ENCODE measurements at regions of chr15 and their contacts with region 1.

Region 1: GRCh38 chr15:67850995-67851571 is 11.2 kb upstream of the RNU6-1 start:
- DNase-seq: no peak
- H3K4me3 ChIP-seq: no peak overlapping the region
- H3K27ac ChIP-seq: no peak overlapping the region
- H3K4me1 ChIP-seq: peaks cover 6% of the 10 kb centered on the region
- H3K27me3 ChIP-seq: no peaks in the 10 kb centered on the region
- CTCF ChIP-seq: no peak

Region 2: GRCh38 chr15:68031404-68031803 is 180.3 kb after region 1 on chr15:
- dilution Hi-C with region 1: loop called (anchors 10 kb)
- DNase-seq: no peak
- H3K4me3 ChIP-seq: no peak overlapping the region
- H3K27ac ChIP-seq: no peak overlapping the region
- H3K4me1 ChIP-seq: no peaks in the 10 kb centered on the region
- H3K27me3 ChIP-seq: no peaks in the 10 kb centered on the region
- CTCF ChIP-seq: no peak

Region 3: DNA sequence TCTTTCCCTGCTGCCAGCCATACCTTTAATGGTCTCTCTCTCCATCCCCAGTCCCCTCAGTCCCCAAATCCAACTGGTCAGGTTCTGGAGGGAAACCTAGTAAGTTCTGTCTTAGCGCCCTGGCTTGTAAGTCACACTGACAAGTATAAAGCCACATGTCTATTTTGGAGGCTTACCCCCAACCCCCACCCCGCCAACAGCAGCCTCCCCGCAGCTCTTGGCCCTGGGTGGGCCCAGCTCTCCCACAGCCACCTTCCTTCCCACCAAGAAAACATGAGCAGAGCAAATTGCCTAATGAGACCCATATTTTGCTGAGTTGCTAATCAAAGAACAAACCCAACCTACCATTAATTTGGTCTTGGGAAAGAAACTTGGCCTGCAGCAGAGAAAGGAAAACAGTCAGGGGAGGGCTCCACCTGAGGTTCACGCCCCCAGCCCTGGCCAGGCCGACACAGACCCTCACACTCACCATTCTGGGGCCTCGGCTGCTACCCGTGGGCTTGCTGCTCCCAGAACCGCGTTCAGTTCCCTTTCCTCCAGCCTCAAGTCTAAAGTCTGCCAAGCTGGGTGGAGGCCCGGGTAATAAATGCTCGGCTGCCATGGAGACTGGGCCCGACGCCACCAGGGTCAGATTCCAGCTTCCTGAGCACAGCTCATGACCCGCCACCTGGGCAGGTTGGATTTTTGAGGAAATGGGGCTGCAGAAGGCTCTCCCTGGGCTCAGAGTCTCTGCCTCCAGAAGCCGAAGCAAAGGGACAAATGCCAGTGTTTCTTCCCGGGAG is 353.9 kb after region 1 on chr15 and contains the start of gene CALML4:
- dilution Hi-C with region 1: no loop called
- DNase-seq: no peak
- H3K4me3 ChIP-seq: peak within 1 kb of the TSS in 2 of 3 experiments; percentile 14 to 36
- H3K27ac ChIP-seq: no peak within 1 kb of the TSS
- H3K4me1 ChIP-seq: peaks cover 21% of the 10 kb centered on the region
- H3K27me3 ChIP-seq: no peaks in the 10 kb centered on the region
- CTCF ChIP-seq: no peak
- polyA plus RNA-seq, gene CALML4: 3.0 to 7.0 TPM (median 3.3 TPM) in 3 replicates

Measured in keratinocyte (primary cell).